Motor neuron (in vitro differentiated cells): ENCODE measurements at regions of chr20 and their contacts with region 1.

Region 1: GRCh38 chr20:59598625-59599310 is 5.6 kb upstream of the PHACTR3 start:
- ATAC-seq: peak; percentile 29 to 89 (median 84)
- H3K4me3 ChIP-seq: no peak overlapping the region
- H3K27ac ChIP-seq: no peak overlapping the region
- H3K4me1 ChIP-seq: peaks cover 16 to 28% of the 10 kb centered on the region in 2 donors

Region 2: GRCh38 chr20:59743767-59744485 is 145.2 kb after region 1 on chr20:
- in situ Hi-C with region 1: loop called in 4 of 9 experiments (anchors 25 kb)
- ATAC-seq: peak; percentile 25 to 97 (median 79)
- H3K4me3 ChIP-seq: no peak overlapping the region
- H3K27ac ChIP-seq: no peak overlapping the region
- H3K4me1 ChIP-seq: peaks cover 4% of the 10 kb centered on the region in 2 donors

Region 3: GRCh38 chr20:59751056-59751688 is 152.4 kb after region 1 on chr20:
- in situ Hi-C with region 1: loop called in 7 of 9 experiments (anchors 10 to 25 kb)
- ATAC-seq: peak; percentile 81 to 98 (median 88)
- H3K4me3 ChIP-seq: no peak overlapping the region
- H3K27ac ChIP-seq: no peak overlapping the region
- H3K4me1 ChIP-seq: peaks cover 45 to 50% of the 10 kb centered on the region in 2 donors